Sigmoid colon (tissue), 7 donors: ENCODE measurements at regions of chr5 and their contacts with region 1.

Region 1: GRCh38 chr5:180784497-180785097 is 18.0 kb downstream of the MGAT1 start:
- DNase-seq: peak; percentile 89
- H3K4me3 ChIP-seq: no peak overlapping the region
- H3K27ac ChIP-seq: peak overlapping the region; percentile 77 to 89 (median 82)
- H3K4me1 ChIP-seq: peaks cover 0 to 48% (median 35%) of the 10 kb centered on the region in 4 donors
- H3K27me3 ChIP-seq: no peaks in the 10 kb centered on the region
- CTCF ChIP-seq: peak; percentile 24 to 65 (median 59)
- EP300 ChIP-seq: no peak
- POLR2A ChIP-seq: no peak

Region 2: GRCh38 chr5:180802325-180803180 is 18.0 kb after region 1 on chr5 and contains the start of gene MGAT1:
- intact Hi-C with region 1: loop called (anchors 2 kb)
- DNase-seq: peak; percentile 96
- H3K4me3 ChIP-seq: peak within 1 kb of the TSS; percentile 66 to 95 (median 88)
- H3K27ac ChIP-seq: peak within 1 kb of the TSS; percentile 97 to 99 (median 98)
- H3K4me1 ChIP-seq: peaks cover 0 to 91% (median 83%) of the 10 kb centered on the region in 4 donors
- H3K27me3 ChIP-seq: no peaks in the 10 kb centered on the region
- CTCF ChIP-seq: no peak
- EP300 ChIP-seq: no peak
- POLR2A ChIP-seq: peak; percentile 39
- total RNA-seq, gene MGAT1: 94.5 to 149 (median 121) TPM

Region 3: GRCh38 chr5:180831139-180832048 is 46.8 kb after region 1 on chr5:
- intact Hi-C with region 1: loop called (anchors 1 kb)
- DNase-seq: peak; percentile 94
- H3K4me3 ChIP-seq: peak overlapping the region; percentile 83 to 93 (median 88)
- H3K27ac ChIP-seq: peak overlapping the region; percentile 96 to 100 (median 97)
- H3K4me1 ChIP-seq: peaks cover 0 to 34% (median 25%) of the 10 kb centered on the region in 4 donors
- H3K27me3 ChIP-seq: no peaks in the 10 kb centered on the region
- CTCF ChIP-seq: peak in 2 of 4 experiments; percentile 13 to 19
- EP300 ChIP-seq: peak in 2 of 4 donors; percentile 11 to 13
- POLR2A ChIP-seq: peak; percentile 81 to 84

Region 4: DNA sequence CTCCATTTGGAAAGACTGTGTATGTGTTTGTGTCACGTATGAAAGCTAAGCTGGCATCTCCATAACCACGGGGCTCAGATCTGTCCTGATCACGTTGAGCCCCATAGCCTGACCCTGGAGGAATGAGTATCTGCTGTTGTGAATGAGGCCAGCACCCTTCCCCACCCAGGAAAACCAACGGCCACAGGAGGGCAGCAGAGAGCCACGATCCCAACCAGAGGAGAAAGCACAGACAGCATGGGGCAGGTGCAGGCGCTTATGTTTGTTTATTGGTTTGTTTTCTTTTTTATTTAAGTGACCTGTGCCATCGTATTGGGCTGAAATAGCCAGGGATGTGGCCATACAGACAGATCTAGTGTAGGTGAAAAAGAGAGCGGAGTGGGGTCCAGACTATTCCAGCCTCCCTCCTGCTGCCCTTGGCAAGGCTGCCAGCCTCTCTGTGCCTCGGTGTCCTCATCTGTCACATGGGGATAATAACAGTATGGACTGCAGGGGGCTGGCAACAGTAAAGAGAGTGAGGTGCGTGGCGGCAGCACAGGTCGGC is 374.8 kb after region 1 on chr5:
- intact Hi-C with region 1: loop called (anchors 2 kb)
- DNase-seq: peak; percentile 91
- H3K4me3 ChIP-seq: no peak overlapping the region
- H3K27ac ChIP-seq: peak overlapping the region in 2 of 4 donors; percentile 72 to 80
- H3K4me1 ChIP-seq: peaks cover 0 to 12% (median 5%) of the 10 kb centered on the region in 4 donors
- H3K27me3 ChIP-seq: peaks cover 0 to 27% (median 3%) of the 10 kb centered on the region in 3 donors
- CTCF ChIP-seq: peak; percentile 76 to 92 (median 79)
- EP300 ChIP-seq: no peak
- POLR2A ChIP-seq: no peak

Region 5: GRCh38 chr5:181243512-181244343 is 459.1 kb after region 1 on chr5 and contains the start of gene RACK1:
- intact Hi-C with region 1: no loop called
- DNase-seq: peak; percentile 93
- H3K4me3 ChIP-seq: peak within 1 kb of the TSS; percentile 66 to 79 (median 74)
- H3K27ac ChIP-seq: peak within 1 kb of the TSS; percentile 95 to 99 (median 96)
- H3K4me1 ChIP-seq: peaks cover 0 to 62% (median 50%) of the 10 kb centered on the region in 4 donors
- H3K27me3 ChIP-seq: no peaks in the 10 kb centered on the region
- CTCF ChIP-seq: no peak
- EP300 ChIP-seq: no peak
- POLR2A ChIP-seq: peak; percentile 54 to 69
- total RNA-seq, gene RACK1: 2,029 to 2,209 (median 2,163) TPM